ENCODE measurements at regions of chr13 and their contacts with region 1.

Region 1: DNA sequence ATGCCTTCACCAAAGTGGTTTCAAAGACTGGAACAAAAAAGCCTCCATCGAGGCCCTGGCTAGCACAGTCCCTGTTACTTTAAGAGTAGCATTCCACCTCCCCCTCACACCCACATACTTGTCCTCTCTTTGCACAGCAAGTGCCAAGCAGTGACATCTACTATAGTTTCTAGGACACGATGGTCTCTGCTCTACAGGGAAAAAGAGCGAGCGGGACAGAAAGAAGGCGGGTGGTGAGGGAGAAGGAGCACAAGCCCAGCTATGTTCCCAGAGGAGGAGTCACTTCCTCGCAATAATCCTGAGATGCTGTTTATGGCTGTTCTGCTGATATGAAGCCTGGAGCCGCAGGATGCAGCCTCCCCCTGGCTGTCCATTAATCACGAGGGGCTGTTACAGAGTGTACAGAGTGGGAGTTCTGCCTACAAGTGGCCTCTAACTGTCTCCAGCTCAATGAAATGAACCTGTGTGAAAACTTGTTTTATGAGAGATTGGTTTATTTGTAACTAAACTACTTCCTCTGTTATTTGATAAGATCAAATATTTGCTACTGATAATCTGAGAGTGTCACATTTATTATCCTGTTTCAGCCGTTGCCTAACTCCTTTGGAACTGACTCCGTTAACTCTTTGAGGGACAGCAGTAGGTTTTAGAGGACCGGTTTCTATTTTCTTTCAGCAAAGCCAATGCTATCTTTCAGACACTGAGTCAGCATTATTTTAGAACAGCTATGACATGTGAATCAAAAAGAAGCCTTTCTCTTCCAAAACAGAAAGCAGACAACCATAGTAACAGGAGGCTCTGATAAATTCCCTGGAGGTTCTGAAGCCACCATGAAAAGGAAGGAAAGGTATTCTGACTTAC is 208.0 kb downstream of the SPRY2 start:
- DNase-seq: peak in 1 of 2 donors; percentile 86
- H3K4me3 ChIP-seq: peak overlapping the region; percentile 29 to 57
- H3K27ac ChIP-seq: peak overlapping the region; percentile 81 to 88
- H3K4me1 ChIP-seq: peaks cover 12 to 26% of the 10 kb centered on the region in 2 donors
- H3K27me3 ChIP-seq: no peaks in the 10 kb centered on the region
- CTCF ChIP-seq: no peak

Region 2: GRCh38 chr13:80083853-80084676 is 48.9 kb before region 1 on chr13:
- intact Hi-C with region 1: loop called (anchors 1 kb)
- DNase-seq: no peak
- H3K4me3 ChIP-seq: peak overlapping the region in 1 of 2 donors; percentile 15
- H3K27ac ChIP-seq: peak overlapping the region; percentile 39 to 51
- H3K4me1 ChIP-seq: peaks cover 0 to 4% of the 10 kb centered on the region in 2 donors
- H3K27me3 ChIP-seq: no peaks in the 10 kb centered on the region
- CTCF ChIP-seq: no peak

Region 3: GRCh38 chr13:80116107-80116506 is 16.9 kb before region 1 on chr13:
- intact Hi-C with region 1: no loop called
- DNase-seq: no peak
- H3K4me3 ChIP-seq: no peak overlapping the region
- H3K27ac ChIP-seq: no peak overlapping the region
- H3K4me1 ChIP-seq: no peaks in the 10 kb centered on the region
- H3K27me3 ChIP-seq: no peaks in the 10 kb centered on the region
- CTCF ChIP-seq: no peak